GM12878 (cell line): ENCODE measurements at regions of chr2 and their contacts with region 1.

Region 1: GRCh38 chr2:195318440-195319111 is 338.4 kb upstream of the SLC39A10 start:
- DNase-seq: no peak
- ATAC-seq: peak; percentile 46
- H3K4me3 ChIP-seq: no peak overlapping the region
- H3K27ac ChIP-seq: no peak overlapping the region
- H3K4me1 ChIP-seq: no peaks in the 10 kb centered on the region
- H3K27me3 ChIP-seq: no peaks in the 10 kb centered on the region
- CTCF ChIP-seq: peak; percentile 27 to 76 (median 50); a peak in 5 of 6 replicates
- EP300 ChIP-seq: no peak
- POLR2A ChIP-seq: no peak
- RAD21 ChIP-seq: peak; percentile 85

Region 2: DNA sequence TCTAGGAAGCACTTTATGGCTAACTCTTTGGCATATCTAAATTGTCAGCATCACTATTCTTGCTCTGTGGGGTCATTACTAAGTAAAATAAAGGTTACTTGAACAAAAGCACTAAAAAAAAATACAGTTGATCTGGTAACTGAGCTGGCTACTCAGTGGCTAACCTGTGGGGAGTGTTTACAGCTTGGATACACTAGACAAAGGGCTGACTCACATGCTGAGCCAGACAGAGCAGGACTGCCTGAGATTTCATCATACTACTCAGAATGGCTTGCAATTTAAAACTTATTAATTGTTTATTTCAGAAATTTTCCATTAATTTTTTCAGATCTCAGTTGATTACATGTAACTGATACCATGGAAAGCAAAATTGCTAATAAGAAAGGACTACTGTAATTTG is 1352.0 kb before region 1 on chr2:
- CTCF ChIA-PET with region 1: interaction called, 3 read pairs
- POLR2A ChIA-PET with region 1: no interaction called
- RAD21 ChIA-PET with region 1: no interaction called
- SMC1A ChIA-PET with region 1: no interaction called
- in situ Hi-C with region 1: no loop called
- intact Hi-C with region 1: loop called (anchors 5 kb)
- DNase-seq: no peak
- ATAC-seq: no peak
- H3K4me3 ChIP-seq: no peak overlapping the region
- H3K27ac ChIP-seq: no peak overlapping the region
- H3K4me1 ChIP-seq: no peaks in the 10 kb centered on the region
- H3K27me3 ChIP-seq: no peaks in the 10 kb centered on the region
- CTCF ChIP-seq: no peak
- EP300 ChIP-seq: no peak
- POLR2A ChIP-seq: no peak
- RAD21 ChIP-seq: no peak

Region 3: DNA sequence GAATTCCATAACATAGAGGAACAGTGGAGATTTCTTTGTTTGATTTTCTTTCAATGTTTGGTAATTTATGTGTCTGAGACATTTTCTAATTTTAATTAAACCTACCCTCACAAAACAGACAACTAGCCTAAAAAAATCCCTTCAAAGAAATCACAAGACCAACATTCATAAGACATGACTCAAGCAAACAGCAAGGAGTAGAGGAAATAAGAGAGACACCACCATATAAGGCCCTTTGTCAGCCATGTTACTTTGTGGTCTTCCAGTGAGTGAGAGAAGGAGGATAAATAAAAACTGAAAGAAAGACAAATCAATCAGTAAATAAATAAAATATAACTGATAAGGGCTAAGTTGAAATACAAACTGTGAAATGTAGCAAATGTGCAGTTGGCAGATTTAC is 492.3 kb before region 1 on chr2:
- CTCF ChIA-PET with region 1: interaction called, 3 read pairs
- POLR2A ChIA-PET with region 1: no interaction called
- RAD21 ChIA-PET with region 1: no interaction called
- SMC1A ChIA-PET with region 1: no interaction called
- in situ Hi-C with region 1: no loop called
- intact Hi-C with region 1: loop called (anchors 10 kb)
- DNase-seq: no peak
- ATAC-seq: no peak
- H3K4me3 ChIP-seq: no peak overlapping the region
- H3K27ac ChIP-seq: no peak overlapping the region
- H3K4me1 ChIP-seq: no peaks in the 10 kb centered on the region
- H3K27me3 ChIP-seq: no peaks in the 10 kb centered on the region
- CTCF ChIP-seq: no peak
- EP300 ChIP-seq: no peak
- POLR2A ChIP-seq: no peak
- RAD21 ChIP-seq: no peak

Region 4: DNA sequence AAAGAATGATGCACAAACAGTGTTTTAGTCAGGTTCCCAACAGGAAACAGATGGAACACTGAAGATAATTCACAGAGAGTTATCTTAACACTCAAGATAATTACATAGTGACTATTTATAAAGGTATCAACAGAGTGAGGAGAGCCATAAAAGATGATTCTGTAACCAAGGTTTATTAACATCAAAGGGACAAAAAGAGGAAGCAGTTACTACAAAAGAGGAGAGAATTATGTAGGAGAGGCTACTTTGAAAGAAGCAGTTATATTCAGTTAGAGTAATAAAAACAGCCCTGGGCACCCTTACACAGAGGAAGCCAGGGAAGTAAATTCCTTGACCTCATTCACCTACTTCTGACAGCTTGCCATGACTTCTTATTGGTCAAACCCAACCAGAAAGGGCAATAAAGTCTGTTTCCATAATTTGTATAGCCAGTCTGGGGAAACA is 12.0 kb after region 1 on chr2:
- CTCF ChIA-PET with region 1: interaction called, 5 read pairs
- POLR2A ChIA-PET with region 1: no interaction called
- RAD21 ChIA-PET with region 1: interaction called, 5 read pairs
- SMC1A ChIA-PET with region 1: interaction called, 11 read pairs
- in situ Hi-C with region 1: no loop called
- intact Hi-C with region 1: no loop called
- DNase-seq: no peak
- ATAC-seq: peak; percentile 88
- H3K4me3 ChIP-seq: no peak overlapping the region
- H3K27ac ChIP-seq: no peak overlapping the region
- H3K4me1 ChIP-seq: no peaks in the 10 kb centered on the region
- H3K27me3 ChIP-seq: no peaks in the 10 kb centered on the region
- CTCF ChIP-seq: no peak
- EP300 ChIP-seq: 0 out of 4 replicates have a peak, but pooled peaks have one; percentile 27 to 31
- POLR2A ChIP-seq: no peak
- RAD21 ChIP-seq: no peak

Region 5: DNA sequence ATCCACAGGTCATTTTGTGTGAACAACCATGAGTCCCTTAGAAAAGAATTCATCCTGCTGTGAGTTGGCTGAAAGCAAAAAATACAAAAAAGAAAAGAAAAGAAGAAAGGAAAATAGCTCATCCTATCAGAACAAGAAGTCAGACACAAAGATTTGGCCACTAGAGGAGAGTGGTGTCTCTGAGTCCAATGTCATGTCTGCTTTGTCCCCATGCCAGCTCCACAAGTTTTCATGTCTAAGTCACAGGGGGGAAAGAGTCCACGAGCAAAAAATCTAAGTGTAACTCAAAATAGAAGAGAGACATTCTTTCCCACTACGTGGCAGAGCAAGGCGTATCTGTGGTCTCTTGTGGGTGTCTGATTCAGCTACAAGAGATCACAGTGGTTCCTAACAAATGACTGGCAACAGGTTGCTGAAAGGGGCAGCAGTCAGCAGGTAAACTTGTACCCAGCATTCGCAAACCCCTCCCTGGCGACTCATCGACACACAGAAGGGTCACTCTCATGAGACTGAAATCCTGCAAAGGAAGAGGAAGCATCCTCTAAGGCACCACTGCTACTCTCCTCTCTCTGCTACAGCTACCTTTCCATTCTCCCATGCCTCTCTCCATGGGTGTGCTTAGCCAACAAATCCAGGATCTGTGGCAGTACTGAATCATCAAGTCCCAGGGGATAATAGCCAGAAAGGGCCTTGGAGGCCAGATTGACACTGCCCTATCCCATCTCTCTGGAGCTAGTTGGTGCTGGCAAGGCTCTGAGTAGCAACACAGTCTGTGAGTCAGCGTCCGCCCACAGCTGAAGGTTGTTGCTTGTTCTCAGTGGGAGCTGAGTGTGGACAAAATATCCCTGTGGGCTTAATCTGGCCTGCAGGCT is 215.4 kb after region 1 on chr2:
- CTCF ChIA-PET with region 1: interaction called, 8 read pairs
- POLR2A ChIA-PET with region 1: no interaction called
- RAD21 ChIA-PET with region 1: interaction called, 23 read pairs
- SMC1A ChIA-PET with region 1: interaction called, 9 read pairs
- in situ Hi-C with region 1: no loop called
- intact Hi-C with region 1: no loop called
- DNase-seq: no peak
- ATAC-seq: peak; percentile 42
- H3K4me3 ChIP-seq: no peak overlapping the region
- H3K27ac ChIP-seq: no peak overlapping the region; the same call in 1 of the 2 replicates
- H3K4me1 ChIP-seq: peaks cover 29% of the 10 kb centered on the region
- H3K27me3 ChIP-seq: no peaks in the 10 kb centered on the region
- CTCF ChIP-seq: peak; percentile 23 to 35 (median 30); a peak in 3 of 6 replicates
- EP300 ChIP-seq: no peak
- POLR2A ChIP-seq: no peak
- RAD21 ChIP-seq: peak; percentile 27; the same call in 1 of the 2 replicates

Region 6: DNA sequence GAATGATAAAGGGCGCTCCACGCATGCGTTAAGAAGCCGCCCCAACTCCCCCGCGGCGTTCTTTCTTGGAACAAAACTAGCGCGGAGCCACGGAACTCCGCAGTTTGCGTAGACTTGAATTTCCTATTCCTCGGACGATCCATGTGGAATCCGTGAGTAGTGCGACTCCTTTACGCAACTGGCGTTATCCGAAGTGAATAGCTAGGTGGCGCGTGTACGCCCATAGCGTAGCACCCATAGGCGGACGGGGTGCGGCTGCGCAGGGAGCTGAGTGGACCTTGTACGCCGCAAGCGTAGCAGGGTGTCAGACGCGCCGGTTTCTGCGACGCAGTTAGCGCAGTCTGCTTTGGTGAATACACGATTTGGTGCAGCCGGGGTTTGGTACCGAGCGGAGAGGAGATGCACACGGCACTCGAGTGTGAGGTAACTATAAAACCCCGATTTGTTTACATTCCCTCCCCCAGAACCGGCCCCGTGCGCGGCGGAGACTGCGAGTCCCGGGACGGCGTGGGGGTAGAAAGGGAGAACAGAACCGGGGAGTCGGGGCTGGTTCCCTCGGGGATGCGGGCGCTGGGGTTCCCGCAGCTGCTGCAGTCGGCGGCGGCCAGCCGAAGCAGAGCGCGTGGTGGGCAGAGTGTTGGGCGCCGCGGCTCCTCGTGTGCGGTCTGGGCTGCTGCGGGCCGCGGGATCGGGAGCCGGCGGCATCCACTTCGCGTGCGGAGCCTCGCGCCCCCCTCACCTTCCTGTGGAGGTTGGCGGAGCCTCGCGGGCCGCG is 338.5 kb after region 1 on chr2 and contains the start of gene SLC39A10:
- CTCF ChIA-PET with region 1: interaction called, 54 read pairs
- POLR2A ChIA-PET with region 1: no interaction called
- RAD21 ChIA-PET with region 1: interaction called, 31 read pairs
- SMC1A ChIA-PET with region 1: interaction called, 22 read pairs
- in situ Hi-C with region 1: no loop called
- intact Hi-C with region 1: loop called (anchors 2 kb)
- DNase-seq: peak; percentile 93
- ATAC-seq: peak; percentile 78
- H3K4me3 ChIP-seq: peak within 1 kb of the TSS; percentile 98
- H3K27ac ChIP-seq: peak within 1 kb of the TSS; percentile 96
- H3K4me1 ChIP-seq: no peaks in the 10 kb centered on the region
- H3K27me3 ChIP-seq: no peaks in the 10 kb centered on the region
- CTCF ChIP-seq: peak in 1 of 3 experiments; percentile 25; a peak in 1 of 6 replicates
- EP300 ChIP-seq: 0 out of 4 replicates have a peak, but pooled peaks of 1 of the 2 experiments have one; percentile 18
- POLR2A ChIP-seq: peak; percentile 98
- RAD21 ChIP-seq: no peak
- polyA plus RNA-seq, gene SLC39A10: 2.0 to 4.9 TPM

Region 7: GRCh38 chr2:196068271-196069209 is 750.0 kb after region 1 on chr2 and contains the start of gene DNAH7:
- CTCF ChIA-PET with region 1: interaction called, 22 read pairs
- POLR2A ChIA-PET with region 1: no interaction called
- RAD21 ChIA-PET with region 1: interaction called, 16 read pairs
- SMC1A ChIA-PET with region 1: interaction called, 13 read pairs
- in situ Hi-C with region 1: loop called (anchors 10 kb)
- intact Hi-C with region 1: loop called (anchors 5 kb)
- DNase-seq: peak; percentile 64
- ATAC-seq: peak; percentile 98
- H3K4me3 ChIP-seq: peak within 1 kb of the TSS; percentile 68
- H3K27ac ChIP-seq: peak within 1 kb of the TSS; percentile 43
- H3K4me1 ChIP-seq: no peaks in the 10 kb centered on the region; the same call in 1 of the 2 replicates
- H3K27me3 ChIP-seq: no peaks in the 10 kb centered on the region
- CTCF ChIP-seq: peak; percentile 91 to 98 (median 97); a peak in 5 of 6 replicates
- EP300 ChIP-seq: no peak; a peak in 1 of 4 replicates
- POLR2A ChIP-seq: peak; percentile 22; the same call in 1 of the 2 replicates
- RAD21 ChIP-seq: peak; percentile 92
- polyA plus RNA-seq, gene DNAH7: 0.05 to 0.14 TPM